B cell (primary cell): ENCODE measurements at regions of chr22 and their contacts with region 1.

Region 1: DNA sequence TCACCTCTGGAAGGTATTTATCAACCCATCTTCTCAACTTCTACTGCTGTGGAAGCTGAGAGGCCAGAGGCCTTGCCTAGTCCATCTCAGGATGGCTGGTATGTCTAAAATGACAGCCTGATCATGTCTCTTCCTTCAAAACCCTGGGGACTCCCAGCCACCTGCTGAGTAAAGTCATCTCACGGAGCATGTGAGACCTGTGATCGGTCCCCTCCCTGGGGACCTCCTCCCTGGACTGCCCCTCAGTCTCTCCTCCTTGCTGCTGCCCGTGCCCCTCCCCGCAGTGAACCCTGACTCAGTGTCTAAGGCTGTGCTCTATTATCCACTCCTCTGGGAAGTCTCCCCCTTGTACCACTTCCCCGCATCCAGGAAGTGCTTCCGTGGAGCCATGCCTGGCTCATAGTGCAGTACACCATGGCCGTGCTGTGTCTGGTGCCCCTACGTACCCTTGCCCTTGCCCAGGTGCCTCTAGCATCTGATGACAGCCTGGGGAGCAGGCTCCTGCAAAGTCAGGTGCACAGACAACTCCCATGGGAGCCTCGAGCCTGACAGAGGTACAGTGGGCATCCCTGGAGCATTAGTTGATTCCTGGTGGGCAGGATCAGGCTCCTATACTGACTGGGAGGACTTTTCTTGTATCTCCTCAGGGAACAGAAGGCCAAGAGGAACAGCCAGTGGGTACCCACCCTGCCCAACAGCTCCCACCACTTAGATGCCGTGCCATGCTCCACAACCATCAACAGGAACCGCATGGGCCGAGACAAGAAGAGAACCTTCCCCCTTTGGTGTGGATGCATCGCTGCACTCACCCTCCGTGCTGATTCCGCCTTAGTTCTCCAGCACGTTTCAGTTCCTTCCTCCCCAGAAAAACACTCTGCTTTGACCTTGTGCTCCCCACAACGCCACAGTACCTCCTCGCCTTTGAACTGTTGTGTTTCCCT is 13.8 kb downstream of the SMARCB1 start:
- DNase-seq: peak; percentile 89
- ATAC-seq: peak; percentile 70
- H3K4me3 ChIP-seq: peak overlapping the region in 4 of 5 experiments; percentile 0 to 44 (median 4)
- H3K4me3 Mint-ChIP-seq: peak overlapping the region; percentile 81
- H3K27ac ChIP-seq: peak overlapping the region; percentile 92 to 93
- H3K27ac Mint-ChIP-seq: peak overlapping the region; percentile 96
- H3K4me1 ChIP-seq: peaks cover 63 to 76% of the 10 kb centered on the region in 2 donors
- H3K4me1 Mint-ChIP-seq: peaks cover 70% of the 10 kb centered on the region
- H3K27me3 ChIP-seq: no peaks in the 10 kb centered on the region
- H3K27me3 Mint-ChIP-seq: no peaks in the 10 kb centered on the region
- CTCF ChIP-seq: no peak

Region 2: GRCh38 chr22:23750714-23751440 is 49.7 kb before region 1 on chr22 and contains the start of gene ZNF70:
- CTCF ChIA-PET with region 1: interaction called, 5 read pairs
- POLR2A ChIA-PET with region 1: interaction called, 7 read pairs
- intact Hi-C with region 1: loop called (anchors 1 kb)
- DNase-seq: peak; percentile 92
- ATAC-seq: peak; percentile 56
- H3K4me3 ChIP-seq: peak within 1 kb of the TSS; percentile 6 to 88 (median 83)
- H3K4me3 Mint-ChIP-seq: peak within 1 kb of the TSS; percentile 93
- H3K27ac ChIP-seq: peak within 1 kb of the TSS; percentile 85 to 98
- H3K27ac Mint-ChIP-seq: peak within 1 kb of the TSS; percentile 99
- H3K4me1 ChIP-seq: peaks cover 24 to 53% of the 10 kb centered on the region in 2 donors
- H3K4me1 Mint-ChIP-seq: peaks cover 55% of the 10 kb centered on the region
- H3K27me3 ChIP-seq: no peaks in the 10 kb centered on the region
- H3K27me3 Mint-ChIP-seq: no peaks in the 10 kb centered on the region
- CTCF ChIP-seq: no peak
- total RNA-seq, gene ZNF70: 8.3 and 9.6 TPM in 2 replicates

Region 3: GRCh38 chr22:23820748-23821211 is 20.2 kb after region 1 on chr22:
- CTCF ChIA-PET with region 1: interaction called, 4 read pairs
- POLR2A ChIA-PET with region 1: interaction called, 3 read pairs
- intact Hi-C with region 1: loop called (anchors 2 kb)
- DNase-seq: peak; percentile 41
- ATAC-seq: peak; percentile 81
- H3K4me3 ChIP-seq: no peak overlapping the region
- H3K4me3 Mint-ChIP-seq: peak overlapping the region; percentile 68
- H3K27ac ChIP-seq: peak overlapping the region; percentile 60 to 68
- H3K27ac Mint-ChIP-seq: peak overlapping the region; percentile 93
- H3K4me1 ChIP-seq: peaks cover 43% of the 10 kb centered on the region in 2 donors
- H3K4me1 Mint-ChIP-seq: peaks cover 59% of the 10 kb centered on the region
- H3K27me3 ChIP-seq: no peaks in the 10 kb centered on the region
- H3K27me3 Mint-ChIP-seq: no peaks in the 10 kb centered on the region
- CTCF ChIP-seq: no peak

Region 4: GRCh38 chr22:24315367-24315966 is 514.9 kb after region 1 on chr22:
- CTCF ChIA-PET with region 1: no interaction called
- POLR2A ChIA-PET with region 1: no interaction called
- intact Hi-C with region 1: no loop called
- DNase-seq: no peak
- ATAC-seq: no peak
- H3K4me3 ChIP-seq: no peak overlapping the region
- H3K4me3 Mint-ChIP-seq: no peak overlapping the region
- H3K27ac ChIP-seq: no peak overlapping the region
- H3K27ac Mint-ChIP-seq: no peak overlapping the region
- H3K4me1 ChIP-seq: no peaks in the 10 kb centered on the region
- H3K4me1 Mint-ChIP-seq: no peaks in the 10 kb centered on the region
- H3K27me3 ChIP-seq: no peaks in the 10 kb centered on the region
- H3K27me3 Mint-ChIP-seq: no peaks in the 10 kb centered on the region
- CTCF ChIP-seq: no peak